K562 (cell line): ENCODE measurements at regions of chr6 and their contacts with region 1.

Region 1: GRCh38 chr6:2999618-3000557 is at the start of gene NQO2:
- DNase-seq: peak; percentile 95 to 100 (median 100)
- ATAC-seq: peak; percentile 87
- H3K4me3 ChIP-seq: peak within 1 kb of the TSS; percentile 86
- H3K27ac ChIP-seq: peak within 1 kb of the TSS; percentile 79
- H3K4me1 ChIP-seq: peaks cover 23 to 27% of the 10 kb centered on the region in 2 experiments; a peak in 4 of 5 replicates
- H3K27me3 ChIP-seq: no peaks in the 10 kb centered on the region
- CTCF ChIP-seq: no peak
- EP300 ChIP-seq: no peak
- POLR2A ChIP-seq: peak; percentile 92
- RAD21 ChIP-seq: peak in 1 of 2 experiments; percentile 29; a peak in 2 of 4 replicates
- polyA plus RNA-seq, gene NQO2: 54.6 to 70.1 TPM

Region 2: GRCh38 chr6:1952726-1953360 is 1047.0 kb before region 1 on chr6:
- CTCF ChIA-PET with region 1: no interaction called
- POLR2A ChIA-PET with region 1: no interaction called
- in situ Hi-C with region 1: no loop called
- intact Hi-C with region 1: no loop called
- DNase-seq: no peak
- ATAC-seq: no peak
- H3K4me3 ChIP-seq: no peak overlapping the region
- H3K27ac ChIP-seq: no peak overlapping the region
- H3K4me1 ChIP-seq: no peaks in the 10 kb centered on the region
- H3K27me3 ChIP-seq: no peaks in the 10 kb centered on the region
- CTCF ChIP-seq: no peak
- EP300 ChIP-seq: no peak
- POLR2A ChIP-seq: no peak
- RAD21 ChIP-seq: no peak

Region 3: GRCh38 chr6:3013479-3013878 is 13.6 kb after region 1 on chr6:
- CTCF ChIA-PET with region 1: no interaction called
- POLR2A ChIA-PET with region 1: interaction called, 87 read pairs
- in situ Hi-C with region 1: no loop called
- intact Hi-C with region 1: no loop called
- DNase-seq: peak in 1 of 4 experiments; percentile 11
- ATAC-seq: no peak
- H3K4me3 ChIP-seq: no peak overlapping the region
- H3K27ac ChIP-seq: no peak overlapping the region
- H3K4me1 ChIP-seq: peaks cover 0 to 4% of the 10 kb centered on the region in 2 experiments; a peak in 1 of 5 replicates
- H3K27me3 ChIP-seq: no peaks in the 10 kb centered on the region
- CTCF ChIP-seq: no peak
- EP300 ChIP-seq: no peak
- POLR2A ChIP-seq: no peak
- RAD21 ChIP-seq: no peak

Region 4: DNA sequence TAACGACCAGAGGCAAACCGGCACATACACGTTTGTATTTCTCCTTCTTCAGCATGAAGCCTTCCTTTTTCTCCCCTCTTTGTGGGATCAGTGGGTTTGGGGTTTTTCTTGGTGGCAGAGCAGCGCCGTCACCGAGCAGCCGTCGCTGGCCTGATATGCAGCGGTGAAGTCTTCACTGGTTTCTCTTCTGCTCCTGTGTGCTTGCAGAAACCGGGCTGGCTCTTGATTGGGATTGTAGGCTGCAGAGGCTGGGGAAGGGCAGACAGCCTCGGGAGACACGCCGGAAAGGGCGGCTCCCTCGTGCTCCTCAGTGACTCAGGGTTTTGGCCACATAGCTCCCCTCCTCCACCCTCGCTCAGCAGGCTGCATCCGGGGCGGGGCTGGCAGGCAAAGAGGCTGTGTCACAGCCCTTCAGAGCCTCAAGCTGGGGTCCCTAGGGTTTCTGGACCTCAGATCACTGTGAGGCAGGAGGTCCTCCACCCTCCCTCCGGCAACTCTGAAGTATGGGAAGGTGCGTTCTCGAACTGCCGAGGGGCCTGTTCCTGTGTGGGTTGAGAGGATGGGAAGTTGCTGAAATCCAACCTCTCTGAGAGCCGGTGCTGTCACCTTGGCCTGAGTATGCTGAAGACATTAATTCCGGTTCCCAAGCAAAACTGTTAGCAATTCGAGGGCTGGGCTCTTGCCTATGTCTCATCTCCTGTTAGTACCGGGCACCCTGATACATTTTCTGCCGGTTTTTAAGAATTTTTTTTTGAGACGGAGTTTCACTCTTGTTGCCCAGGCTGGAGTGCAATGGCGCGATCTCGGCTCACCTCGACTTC is 24.0 kb after region 1 on chr6:
- CTCF ChIA-PET with region 1: no interaction called
- POLR2A ChIA-PET with region 1: interaction called, 87 read pairs
- in situ Hi-C with region 1: no loop called
- intact Hi-C with region 1: loop called (anchors 1 kb)
- DNase-seq: peak; percentile 96 to 100 (median 96)
- ATAC-seq: peak; percentile 90
- H3K4me3 ChIP-seq: peak overlapping the region; percentile 75
- H3K27ac ChIP-seq: peak overlapping the region; percentile 98
- H3K4me1 ChIP-seq: peaks cover 32 to 46% of the 10 kb centered on the region in 2 experiments
- H3K27me3 ChIP-seq: no peaks in the 10 kb centered on the region
- CTCF ChIP-seq: 0 out of 6 replicates have a peak, but pooled peaks of 1 of the 3 experiments have one; percentile 2
- EP300 ChIP-seq: peak; percentile 96
- POLR2A ChIP-seq: peak; percentile 98
- RAD21 ChIP-seq: peak; percentile 20 to 39

Region 5: GRCh38 chr6:3039384-3039783 is 39.5 kb after region 1 on chr6:
- CTCF ChIA-PET with region 1: no interaction called
- POLR2A ChIA-PET with region 1: interaction called, 10 read pairs
- in situ Hi-C with region 1: no loop called
- intact Hi-C with region 1: no loop called
- DNase-seq: no peak
- ATAC-seq: no peak
- H3K4me3 ChIP-seq: no peak overlapping the region
- H3K27ac ChIP-seq: no peak overlapping the region
- H3K4me1 ChIP-seq: no peaks in the 10 kb centered on the region; a peak in 1 of 5 replicates
- H3K27me3 ChIP-seq: no peaks in the 10 kb centered on the region
- CTCF ChIP-seq: no peak
- EP300 ChIP-seq: no peak
- POLR2A ChIP-seq: no peak
- RAD21 ChIP-seq: no peak

Region 6: GRCh38 chr6:3068329-3069214 is 68.7 kb after region 1 on chr6 and contains the start of gene RIPK1:
- CTCF ChIA-PET with region 1: interaction called, 5 read pairs
- POLR2A ChIA-PET with region 1: interaction called, 26 read pairs
- in situ Hi-C with region 1: no loop called
- intact Hi-C with region 1: no loop called
- DNase-seq: peak; percentile 96 to 98 (median 96)
- ATAC-seq: peak; percentile 85
- H3K4me3 ChIP-seq: peak within 1 kb of the TSS; percentile 84
- H3K27ac ChIP-seq: peak within 1 kb of the TSS; percentile 97
- H3K4me1 ChIP-seq: peaks cover 19 to 30% of the 10 kb centered on the region in 2 experiments
- H3K27me3 ChIP-seq: no peaks in the 10 kb centered on the region
- CTCF ChIP-seq: peak; percentile 57 to 68 (median 59); a peak in 5 of 6 replicates
- EP300 ChIP-seq: peak; percentile 51
- POLR2A ChIP-seq: peak; percentile 95
- RAD21 ChIP-seq: peak in 1 of 2 experiments; percentile 34; a peak in 3 of 4 replicates
- polyA plus RNA-seq, gene RIPK1: 3.8 to 4.5 TPM

Region 7: GRCh38 chr6:3079700-3080099 is 79.8 kb after region 1 on chr6:
- CTCF ChIA-PET with region 1: no interaction called
- POLR2A ChIA-PET with region 1: no interaction called
- in situ Hi-C with region 1: no loop called
- intact Hi-C with region 1: no loop called
- DNase-seq: peak in 1 of 4 experiments; percentile 11
- ATAC-seq: no peak
- H3K4me3 ChIP-seq: no peak overlapping the region
- H3K27ac ChIP-seq: no peak overlapping the region
- H3K4me1 ChIP-seq: no peaks in the 10 kb centered on the region
- H3K27me3 ChIP-seq: no peaks in the 10 kb centered on the region
- CTCF ChIP-seq: no peak
- EP300 ChIP-seq: no peak
- POLR2A ChIP-seq: no peak
- RAD21 ChIP-seq: no peak

Region 8: GRCh38 chr6:3118353-3119039 is 118.6 kb after region 1 on chr6 and contains the start of gene BPHL:
- CTCF ChIA-PET with region 1: no interaction called
- POLR2A ChIA-PET with region 1: interaction called, 3 read pairs
- in situ Hi-C with region 1: loop called (anchors 10 kb)
- intact Hi-C with region 1: loop called (anchors 5 kb)
- DNase-seq: peak; percentile 97 to 100 (median 100)
- ATAC-seq: peak; percentile 95
- H3K4me3 ChIP-seq: peak within 1 kb of the TSS; percentile 76
- H3K27ac ChIP-seq: peak within 1 kb of the TSS; percentile 86
- H3K4me1 ChIP-seq: peaks cover 8 to 15% of the 10 kb centered on the region in 2 experiments; a peak in 4 of 5 replicates
- H3K27me3 ChIP-seq: no peaks in the 10 kb centered on the region
- CTCF ChIP-seq: no peak
- EP300 ChIP-seq: no peak
- POLR2A ChIP-seq: peak; percentile 94
- RAD21 ChIP-seq: 0 out of 4 replicates have a peak, but pooled peaks of 1 of the 2 experiments have one; percentile 18
- polyA plus RNA-seq, gene BPHL: 3.5 to 9.3 TPM